ENCODE measurements at regions of chr6 and their contacts with region 1.

Region 1: DNA sequence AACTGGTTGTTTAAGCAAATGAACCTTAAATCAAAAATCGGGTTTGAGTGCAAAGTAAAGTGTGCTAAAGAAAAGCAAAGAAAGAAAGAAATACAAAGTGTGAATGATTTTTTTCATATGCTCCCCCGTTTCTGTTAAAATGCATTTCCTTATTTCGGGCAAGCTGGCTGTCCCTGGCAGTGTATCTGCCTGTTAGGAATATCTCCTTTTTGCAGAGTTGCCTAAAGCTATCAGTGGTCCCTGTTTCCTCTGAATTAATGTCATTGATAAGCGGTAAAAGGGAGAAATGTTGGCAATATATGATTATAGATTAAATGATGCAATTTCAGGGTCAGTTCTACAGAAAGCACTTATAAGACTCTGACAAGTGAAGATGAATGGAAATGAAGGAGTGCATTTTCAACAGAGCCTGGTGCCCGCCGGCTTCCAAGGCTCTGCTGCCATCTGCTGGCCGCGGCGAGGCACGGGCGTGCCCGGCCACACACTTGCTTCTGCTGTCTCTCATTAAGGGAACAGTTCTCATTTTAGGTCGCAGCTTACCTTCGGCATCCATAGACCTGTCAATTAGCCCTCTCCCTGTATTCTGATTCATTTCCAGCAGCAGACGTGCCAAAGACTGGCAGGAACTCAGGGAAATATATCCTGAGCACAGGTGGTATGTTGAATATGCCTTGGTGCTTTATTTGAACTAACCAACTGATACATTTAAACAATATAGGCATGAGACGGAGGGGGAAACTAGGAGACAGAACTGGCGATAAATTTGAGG is 381.9 kb downstream of the C6orf118 start:
- DNase-seq: peak in 13 of 14 experiments; percentile 19 to 62 (median 42)
- ATAC-seq: peak; percentile 54
- H3K4me3 ChIP-seq: no peak overlapping the region
- H3K4me3 Mint-ChIP-seq: no peak overlapping the region
- H3K27ac ChIP-seq: no peak overlapping the region
- H3K27ac Mint-ChIP-seq: no peak overlapping the region
- H3K4me1 ChIP-seq: no peaks in the 10 kb centered on the region
- H3K4me1 Mint-ChIP-seq: no peaks in the 10 kb centered on the region
- H3K27me3 ChIP-seq: no peaks in the 10 kb centered on the region
- H3K27me3 Mint-ChIP-seq: no peaks in the 10 kb centered on the region
- CTCF ChIP-seq: peak; percentile 79

Region 2: GRCh38 chr6:163170294-163170883 is 1757.1 kb before region 1 on chr6:
- CTCF ChIA-PET with region 1: no interaction called
- POLR2A ChIA-PET with region 1: no interaction called
- intact Hi-C with region 1: loop called in 1 of 2 experiments (anchors 10 kb)
- DNase-seq: peak in 5 of 14 experiments; percentile 3 to 43 (median 13)
- ATAC-seq: no peak
- H3K4me3 ChIP-seq: no peak overlapping the region
- H3K4me3 Mint-ChIP-seq: no peak overlapping the region
- H3K27ac ChIP-seq: no peak overlapping the region
- H3K27ac Mint-ChIP-seq: no peak overlapping the region
- H3K4me1 ChIP-seq: peaks cover 3% of the 10 kb centered on the region
- H3K4me1 Mint-ChIP-seq: no peaks in the 10 kb centered on the region
- H3K27me3 ChIP-seq: no peaks in the 10 kb centered on the region
- H3K27me3 Mint-ChIP-seq: peaks cover 3% of the 10 kb centered on the region
- CTCF ChIP-seq: peak; percentile 73

Region 3: DNA sequence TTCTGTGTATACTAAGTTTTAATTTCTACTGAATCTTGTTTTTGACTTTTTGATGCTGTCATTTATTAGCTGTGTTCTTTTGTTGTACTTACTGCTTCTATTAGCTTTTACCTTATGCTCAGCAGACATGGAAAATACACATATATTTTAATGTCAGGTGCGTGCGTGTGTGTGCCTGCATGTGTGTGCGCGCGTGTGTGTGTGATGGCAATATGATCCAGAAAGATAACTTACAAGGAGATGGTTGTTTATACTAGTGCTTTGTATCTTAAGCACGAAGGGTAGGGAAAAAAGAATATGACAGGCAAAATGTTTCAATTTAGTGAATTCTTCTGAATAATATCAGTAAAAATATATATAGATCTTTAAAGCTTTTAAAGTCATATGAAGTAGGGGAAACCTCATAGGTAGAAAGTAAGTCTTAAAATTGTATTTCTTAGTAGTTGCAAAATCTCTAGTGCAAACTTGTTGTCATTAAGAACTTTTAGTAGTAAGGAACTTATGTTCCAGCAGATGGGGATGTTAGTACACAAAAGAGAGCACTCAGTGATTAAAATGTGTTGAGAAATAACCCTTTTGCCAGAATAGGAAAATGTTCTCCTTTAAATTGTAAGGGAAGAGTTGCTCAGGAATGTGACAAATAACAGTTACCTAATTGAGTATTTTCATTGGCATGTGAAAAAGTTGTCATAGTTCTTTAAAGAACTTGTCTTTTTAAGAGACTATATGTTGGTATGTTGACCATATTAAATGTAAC is 1499.8 kb before region 1 on chr6:
- CTCF ChIA-PET with region 1: no interaction called
- POLR2A ChIA-PET with region 1: no interaction called
- intact Hi-C with region 1: loop called (anchors 5 kb)
- DNase-seq: peak in 3 of 14 experiments; percentile 52 to 61 (median 61)
- ATAC-seq: no peak
- H3K4me3 ChIP-seq: no peak overlapping the region
- H3K4me3 Mint-ChIP-seq: no peak overlapping the region
- H3K27ac ChIP-seq: no peak overlapping the region
- H3K27ac Mint-ChIP-seq: no peak overlapping the region
- H3K4me1 ChIP-seq: no peaks in the 10 kb centered on the region
- H3K4me1 Mint-ChIP-seq: peaks cover 63% of the 10 kb centered on the region
- H3K27me3 ChIP-seq: no peaks in the 10 kb centered on the region
- H3K27me3 Mint-ChIP-seq: no peaks in the 10 kb centered on the region
- CTCF ChIP-seq: peak; percentile 29

Region 4: GRCh38 chr6:166046226-166046625 is 1118.8 kb after region 1 on chr6:
- CTCF ChIA-PET with region 1: no interaction called
- POLR2A ChIA-PET with region 1: no interaction called
- intact Hi-C with region 1: no loop called
- DNase-seq: no peak
- ATAC-seq: no peak
- H3K4me3 ChIP-seq: no peak overlapping the region
- H3K4me3 Mint-ChIP-seq: no peak overlapping the region
- H3K27ac ChIP-seq: no peak overlapping the region
- H3K27ac Mint-ChIP-seq: no peak overlapping the region
- H3K4me1 ChIP-seq: no peaks in the 10 kb centered on the region
- H3K4me1 Mint-ChIP-seq: no peaks in the 10 kb centered on the region
- H3K27me3 ChIP-seq: peaks cover 0 to 2% of the 10 kb centered on the region in 2 experiments
- H3K27me3 Mint-ChIP-seq: peaks cover 7% of the 10 kb centered on the region
- CTCF ChIP-seq: no peak

Measured in CD4-positive, alpha-beta T cell (primary cell).